Activated CD4-positive, alpha-beta T cell treated with anti-CD3 and anti-CD28 coated beads for 36 hours (primary cell): ENCODE measurements at regions of chr2 and their contacts with region 1.

Region 1: GRCh38 chr2:25951071-25951547 is 31.2 kb downstream of the KIF3C start:
- DNase-seq: peak; percentile 87
- ATAC-seq: peak; percentile 98
- H3K4me3 Mint-ChIP-seq: no peak overlapping the region
- H3K27ac Mint-ChIP-seq: no peak overlapping the region
- H3K4me1 Mint-ChIP-seq: no peaks in the 10 kb centered on the region
- H3K27me3 Mint-ChIP-seq: no peaks in the 10 kb centered on the region

Region 2: DNA sequence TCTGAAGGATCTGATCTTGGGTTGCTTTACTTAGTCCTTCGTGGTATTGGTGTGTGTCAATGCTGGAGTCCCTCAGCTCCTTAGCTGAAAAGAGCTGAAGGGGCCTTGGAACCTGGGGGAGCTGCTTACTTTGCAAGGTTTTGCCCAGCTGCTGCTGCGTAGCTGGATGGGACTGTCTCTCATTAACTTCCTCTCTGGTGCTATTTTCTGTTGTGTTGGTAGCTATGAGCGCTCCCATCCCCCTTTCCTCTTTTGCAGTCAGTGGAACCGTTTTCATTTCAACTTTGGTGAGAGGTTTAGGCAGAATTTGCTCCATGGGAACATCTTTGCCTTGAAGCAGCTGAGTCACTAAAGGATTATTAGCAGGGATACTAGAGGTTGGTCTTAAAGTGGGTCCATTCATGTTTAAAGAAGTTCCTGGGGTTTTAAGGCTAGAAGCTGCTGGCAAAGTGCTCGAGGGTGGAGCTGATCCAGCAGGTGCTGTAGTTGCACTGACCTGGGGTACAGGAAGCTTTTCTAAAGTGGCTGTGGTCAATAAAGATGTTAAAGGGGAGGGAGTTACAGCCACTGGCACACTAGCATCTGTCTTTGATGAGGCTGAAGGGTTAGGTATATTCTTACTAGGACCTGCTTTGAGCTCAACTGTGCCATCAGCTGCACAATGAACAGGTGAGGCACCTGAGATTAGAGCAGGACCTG is 207.8 kb before region 1 on chr2:
- CTCF ChIA-PET with region 1: no interaction called
- POLR2A ChIA-PET with region 1: no interaction called
- intact Hi-C with region 1: no loop called
- DNase-seq: no peak
- ATAC-seq: no peak
- H3K4me3 Mint-ChIP-seq: no peak overlapping the region
- H3K27ac Mint-ChIP-seq: peak overlapping the region; percentile 49
- H3K4me1 Mint-ChIP-seq: peaks cover 22% of the 10 kb centered on the region
- H3K27me3 Mint-ChIP-seq: no peaks in the 10 kb centered on the region

Region 3: GRCh38 chr2:25851740-25852503 is 99.2 kb before region 1 on chr2:
- CTCF ChIA-PET with region 1: interaction called, 7 read pairs
- POLR2A ChIA-PET with region 1: no interaction called
- intact Hi-C with region 1: loop called in 1 of 2 experiments (anchors 1 kb)
- DNase-seq: peak; percentile 38
- ATAC-seq: peak; percentile 90
- H3K4me3 Mint-ChIP-seq: peak overlapping the region; percentile 64
- H3K27ac Mint-ChIP-seq: peak overlapping the region; percentile 86
- H3K4me1 Mint-ChIP-seq: peaks cover 44% of the 10 kb centered on the region
- H3K27me3 Mint-ChIP-seq: no peaks in the 10 kb centered on the region

Region 4: GRCh38 chr2:25991965-25992364 is 40.9 kb after region 1 on chr2:
- CTCF ChIA-PET with region 1: interaction called, 14 read pairs
- POLR2A ChIA-PET with region 1: interaction called, 12 read pairs
- intact Hi-C with region 1: loop called (anchors 1 to 5 kb)
- DNase-seq: no peak
- ATAC-seq: peak; percentile 33
- H3K4me3 Mint-ChIP-seq: no peak overlapping the region
- H3K27ac Mint-ChIP-seq: no peak overlapping the region
- H3K4me1 Mint-ChIP-seq: peaks cover 8% of the 10 kb centered on the region
- H3K27me3 Mint-ChIP-seq: no peaks in the 10 kb centered on the region

Region 5: DNA sequence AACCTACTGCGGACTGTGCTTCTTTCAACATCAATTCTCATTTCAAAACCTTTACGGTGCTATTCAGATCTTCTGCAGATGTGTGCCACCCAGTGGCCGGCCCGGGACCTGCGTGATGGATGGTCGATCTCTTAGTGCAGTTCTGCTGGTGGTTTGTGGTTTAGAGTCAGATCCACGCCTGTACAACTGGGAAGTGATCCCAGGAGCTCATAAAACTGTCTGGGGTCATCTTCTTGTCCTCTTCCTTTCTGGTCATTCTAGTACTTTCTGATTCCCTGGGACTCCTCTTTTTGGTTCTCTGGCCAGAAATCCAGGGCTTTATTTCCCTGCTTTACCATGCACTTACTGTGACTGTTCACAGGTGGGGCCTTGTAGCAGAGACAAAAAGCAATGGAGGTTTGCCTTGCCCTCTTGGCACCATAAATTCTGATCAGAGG is 379.0 kb after region 1 on chr2:
- CTCF ChIA-PET with region 1: interaction called, 3 read pairs
- POLR2A ChIA-PET with region 1: no interaction called
- intact Hi-C with region 1: loop called in 1 of 2 experiments (anchors 1 kb)
- DNase-seq: peak; percentile 94
- ATAC-seq: peak; percentile 97
- H3K4me3 Mint-ChIP-seq: no peak overlapping the region
- H3K27ac Mint-ChIP-seq: no peak overlapping the region
- H3K4me1 Mint-ChIP-seq: peaks cover 9% of the 10 kb centered on the region
- H3K27me3 Mint-ChIP-seq: no peaks in the 10 kb centered on the region

Region 6: DNA sequence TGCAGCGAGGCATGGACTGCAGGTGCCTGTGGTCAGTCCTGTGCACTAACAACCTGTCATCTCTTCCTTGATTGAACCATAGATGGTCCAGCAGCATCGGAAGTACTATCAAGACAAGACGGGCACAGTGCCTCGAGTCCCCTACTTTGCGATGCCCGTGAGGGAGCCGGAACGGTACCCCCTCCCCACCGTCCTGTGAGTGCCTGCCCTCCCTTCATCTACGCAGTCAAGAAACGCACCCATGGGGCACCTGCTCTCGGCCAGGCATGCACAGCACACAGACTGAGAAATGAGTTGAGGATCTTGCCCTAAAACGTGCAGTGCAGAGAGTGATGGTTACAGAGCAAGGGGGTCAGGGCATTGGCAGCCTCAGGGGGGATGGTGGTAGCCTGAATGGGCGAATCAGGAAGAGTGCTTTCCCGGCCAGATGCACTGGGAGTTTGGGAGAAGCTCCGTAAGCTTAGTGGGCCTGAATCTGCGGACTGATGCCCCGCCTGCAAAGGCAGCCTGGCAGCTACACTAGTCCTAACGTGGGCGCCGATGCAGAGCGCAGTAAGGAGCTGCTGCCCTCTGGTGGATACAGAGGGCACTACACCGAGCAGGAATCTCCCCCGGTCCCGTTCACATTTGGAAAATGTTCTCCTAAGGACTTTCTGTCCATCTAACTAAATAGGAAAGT is 626.5 kb after region 1 on chr2:
- CTCF ChIA-PET with region 1: no interaction called
- POLR2A ChIA-PET with region 1: no interaction called
- intact Hi-C with region 1: loop called (anchors 5 to 10 kb)
- DNase-seq: peak; percentile 82
- ATAC-seq: peak; percentile 92
- H3K4me3 Mint-ChIP-seq: no peak overlapping the region
- H3K27ac Mint-ChIP-seq: no peak overlapping the region
- H3K4me1 Mint-ChIP-seq: no peaks in the 10 kb centered on the region
- H3K27me3 Mint-ChIP-seq: peaks cover 2% of the 10 kb centered on the region